ENCODE measurements at regions of chr4 and their contacts with region 1.

Region 1: GRCh38 chr4:112327965-112328733 is 31.0 kb downstream of the ALPK1 start:
- DNase-seq: no peak
- ATAC-seq: no peak
- H3K4me3 ChIP-seq: no peak overlapping the region
- H3K27ac ChIP-seq: no peak overlapping the region
- H3K4me1 ChIP-seq: no peaks in the 10 kb centered on the region
- H3K27me3 ChIP-seq: no peaks in the 10 kb centered on the region
- CTCF ChIP-seq: peak; percentile 59

Region 2: GRCh38 chr4:112312610-112313239 is 15.4 kb before region 1 on chr4:
- CTCF ChIA-PET with region 1: no interaction called
- POLR2A ChIA-PET with region 1: no interaction called
- in situ Hi-C with region 1: no loop called
- intact Hi-C with region 1: no loop called
- DNase-seq: no peak
- ATAC-seq: no peak
- H3K4me3 ChIP-seq: no peak overlapping the region
- H3K27ac ChIP-seq: no peak overlapping the region
- H3K4me1 ChIP-seq: no peaks in the 10 kb centered on the region
- H3K27me3 ChIP-seq: no peaks in the 10 kb centered on the region
- CTCF ChIP-seq: no peak

Region 3: GRCh38 chr4:112422644-112423043 is 94.5 kb after region 1 on chr4:
- CTCF ChIA-PET with region 1: no interaction called
- POLR2A ChIA-PET with region 1: no interaction called
- in situ Hi-C with region 1: no loop called
- intact Hi-C with region 1: no loop called
- DNase-seq: no peak
- ATAC-seq: no peak
- H3K4me3 ChIP-seq: no peak overlapping the region
- H3K27ac ChIP-seq: no peak overlapping the region
- H3K4me1 ChIP-seq: no peaks in the 10 kb centered on the region
- H3K27me3 ChIP-seq: no peaks in the 10 kb centered on the region
- CTCF ChIP-seq: no peak

Region 4: DNA sequence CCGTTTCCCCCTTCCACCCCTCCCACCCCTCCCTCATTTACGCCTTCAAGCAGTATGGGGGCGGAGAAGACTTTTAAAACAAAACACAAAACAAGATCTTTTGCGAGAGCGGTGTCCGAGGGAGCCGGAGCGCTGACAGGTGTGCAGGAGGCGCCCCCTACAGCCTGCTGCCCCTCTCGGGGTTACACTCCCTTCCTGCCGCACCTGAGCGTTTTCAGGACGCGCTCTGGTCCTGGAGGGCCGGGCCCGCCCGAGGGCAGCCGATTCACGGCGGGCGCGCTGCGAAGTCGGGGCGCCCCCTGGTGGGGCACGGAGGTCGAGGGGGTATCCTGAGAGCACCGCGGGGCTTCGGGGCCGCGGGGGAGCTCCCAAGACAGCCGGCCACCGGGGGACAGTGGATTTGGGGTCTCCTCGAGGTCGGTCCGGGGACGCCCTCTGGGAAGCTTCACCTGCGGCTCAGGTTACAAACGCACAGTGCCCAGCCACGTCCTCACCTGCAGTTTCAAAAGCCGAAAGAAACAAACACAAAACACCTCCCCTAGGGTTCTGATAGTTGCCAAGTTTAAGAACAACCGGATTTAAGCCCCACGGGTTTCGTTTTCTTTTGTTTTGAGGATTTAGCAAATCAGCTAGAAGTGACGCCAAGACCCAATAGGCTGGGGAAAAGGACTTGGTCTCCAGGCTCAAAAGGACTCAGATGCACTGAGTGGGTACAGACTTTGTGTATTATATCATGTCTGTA is 195.8 kb after region 1 on chr4:
- CTCF ChIA-PET with region 1: no interaction called
- POLR2A ChIA-PET with region 1: no interaction called
- in situ Hi-C with region 1: no loop called
- intact Hi-C with region 1: loop called (anchors 2 kb)
- DNase-seq: no peak
- ATAC-seq: peak; percentile 92
- H3K4me3 ChIP-seq: peak overlapping the region; percentile 13 to 34; a peak in 3 of 4 replicates
- H3K27ac ChIP-seq: no peak overlapping the region
- H3K4me1 ChIP-seq: no peaks in the 10 kb centered on the region
- H3K27me3 ChIP-seq: peaks cover 13% of the 10 kb centered on the region
- CTCF ChIP-seq: peak; percentile 86

Region 5: GRCh38 chr4:112604589-112604988 is 276.4 kb after region 1 on chr4:
- CTCF ChIA-PET with region 1: interaction called, 5 read pairs
- POLR2A ChIA-PET with region 1: no interaction called
- in situ Hi-C with region 1: no loop called
- intact Hi-C with region 1: loop called (anchors 2 kb)
- DNase-seq: peak; percentile 18
- ATAC-seq: peak; percentile 83
- H3K4me3 ChIP-seq: no peak overlapping the region
- H3K27ac ChIP-seq: no peak overlapping the region
- H3K4me1 ChIP-seq: no peaks in the 10 kb centered on the region
- H3K27me3 ChIP-seq: no peaks in the 10 kb centered on the region
- CTCF ChIP-seq: peak; percentile 67

Region 6: DNA sequence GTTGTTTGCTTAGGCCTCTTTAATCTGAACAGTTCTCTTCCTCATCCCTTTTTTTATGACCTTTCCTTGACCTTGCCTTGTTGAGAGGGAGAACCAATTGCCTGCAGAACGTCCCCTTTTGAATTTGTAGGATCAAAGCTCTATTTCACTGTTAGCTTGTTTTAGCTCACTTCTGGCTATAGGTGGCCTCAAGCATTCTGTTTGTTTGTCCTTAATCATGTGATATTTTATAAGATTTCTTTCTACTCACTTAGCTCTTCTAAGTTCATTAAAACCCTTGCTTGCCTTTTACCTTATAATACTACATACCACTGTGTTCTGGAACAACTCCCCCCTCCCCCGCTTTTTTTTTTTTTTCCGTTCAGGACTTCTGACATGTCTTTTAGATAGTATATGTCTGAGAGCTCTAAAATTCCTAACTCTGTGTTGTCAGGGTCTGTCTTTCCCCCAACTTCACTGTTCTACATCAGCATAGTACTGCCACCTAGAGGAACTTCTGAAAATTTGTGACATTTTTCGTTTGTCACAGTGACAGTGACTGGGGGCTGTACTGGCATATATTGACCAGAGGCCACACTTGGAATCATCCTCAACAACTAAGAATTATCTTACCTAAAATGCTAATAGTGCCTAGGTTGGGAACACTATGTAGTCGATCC is 437.3 kb after region 1 on chr4:
- CTCF ChIA-PET with region 1: no interaction called
- POLR2A ChIA-PET with region 1: no interaction called
- in situ Hi-C with region 1: no loop called
- intact Hi-C with region 1: loop called (anchors 5 kb)
- DNase-seq: no peak
- ATAC-seq: peak; percentile 66; the same call in 1 of the 2 replicates
- H3K4me3 ChIP-seq: no peak overlapping the region
- H3K27ac ChIP-seq: no peak overlapping the region
- H3K4me1 ChIP-seq: no peaks in the 10 kb centered on the region
- H3K27me3 ChIP-seq: no peaks in the 10 kb centered on the region
- CTCF ChIP-seq: peak; percentile 56

Region 7: DNA sequence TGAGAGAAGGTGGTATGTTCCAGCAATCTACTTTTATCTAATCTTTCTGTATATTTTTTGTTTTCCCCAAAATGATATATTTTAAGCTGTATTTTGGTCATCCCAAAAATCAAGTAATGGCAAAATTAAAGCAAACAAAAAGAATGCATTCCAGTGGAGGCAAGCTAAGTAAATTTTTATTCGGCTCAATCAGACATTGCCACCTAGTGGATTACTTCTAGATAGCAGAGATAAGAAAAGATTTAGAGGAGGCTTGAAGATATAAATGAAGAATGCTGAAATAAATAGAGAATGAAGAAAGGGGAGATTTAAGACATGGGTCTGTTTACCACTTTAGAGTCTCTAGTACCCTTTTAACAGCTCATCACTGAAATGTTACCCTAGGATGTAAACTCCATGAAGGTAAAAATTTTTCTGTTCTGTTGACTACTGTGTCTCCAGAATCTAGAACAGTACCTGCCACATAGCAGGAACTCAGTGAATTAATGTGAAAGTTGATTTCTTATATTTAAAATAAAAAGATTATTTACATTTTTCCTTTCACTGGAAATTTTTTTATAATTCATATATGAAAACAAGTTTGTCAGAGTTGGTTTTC is 610.4 kb after region 1 on chr4:
- CTCF ChIA-PET with region 1: no interaction called
- POLR2A ChIA-PET with region 1: no interaction called
- in situ Hi-C with region 1: no loop called
- intact Hi-C with region 1: loop called (anchors 10 kb)
- DNase-seq: peak; percentile 15
- ATAC-seq: no peak
- H3K4me3 ChIP-seq: no peak overlapping the region
- H3K27ac ChIP-seq: no peak overlapping the region
- H3K4me1 ChIP-seq: no peaks in the 10 kb centered on the region
- H3K27me3 ChIP-seq: no peaks in the 10 kb centered on the region
- CTCF ChIP-seq: peak; percentile 70; the same call in 1 of the 2 replicates

Measured in Panc1 (cell line).